ENCODE measurements at regions of chr20 and their contacts with region 1.

Region 1: GRCh38 chr20:32031007-32031958 is 20.8 kb upstream of the HCK start:
- DNase-seq: peak; percentile 67
- H3K4me3 Mint-ChIP-seq: no peak overlapping the region
- H3K27ac Mint-ChIP-seq: no peak overlapping the region
- H3K4me1 Mint-ChIP-seq: no peaks in the 10 kb centered on the region
- H3K27me3 Mint-ChIP-seq: peaks cover 21% of the 10 kb centered on the region

Region 2: DNA sequence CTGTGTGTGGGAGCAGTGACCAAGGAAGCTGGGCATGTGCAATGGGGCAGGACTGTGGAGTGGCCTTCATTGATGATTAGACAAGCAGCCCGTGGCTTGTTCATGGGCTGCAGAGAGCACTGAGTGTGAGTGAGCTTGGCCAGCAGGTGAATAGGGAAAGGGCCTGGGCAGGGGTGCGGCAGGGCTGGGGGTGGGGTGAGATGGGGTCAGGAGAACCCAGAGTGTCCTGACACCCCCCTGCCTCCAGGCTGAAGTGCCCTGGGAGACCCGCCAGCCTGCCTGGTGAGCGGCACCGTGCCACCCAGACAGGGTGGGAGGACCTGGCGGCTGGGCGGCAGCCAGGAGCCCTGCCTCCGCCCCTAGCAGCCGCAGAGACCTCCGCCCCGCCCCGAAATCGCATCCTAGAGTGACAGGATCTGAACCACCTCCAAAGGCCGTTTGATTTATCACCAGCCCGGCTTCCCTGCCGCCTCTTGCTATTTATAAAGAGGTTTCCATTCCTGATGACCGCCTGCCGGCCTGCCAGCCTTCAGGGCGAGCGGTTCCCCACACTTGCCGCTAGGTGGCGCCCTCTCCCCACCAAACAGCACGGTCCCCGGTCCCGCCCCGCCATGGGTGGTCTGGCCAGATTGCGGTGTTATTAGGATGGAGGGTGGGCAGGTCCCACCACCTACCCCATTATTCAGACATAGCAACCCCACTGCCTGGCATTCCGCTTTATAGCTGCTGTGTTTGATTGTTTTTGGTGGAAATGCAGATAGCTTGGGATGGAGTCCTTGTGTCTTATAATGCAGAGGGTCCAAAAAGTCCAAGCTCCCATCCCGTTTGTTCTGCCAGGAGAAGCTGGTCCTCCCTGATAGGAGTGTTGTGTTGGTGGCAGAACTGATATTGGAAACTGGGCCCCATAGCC is 208.6 kb before region 1 on chr20:
- CTCF ChIA-PET with region 1: interaction called, 43 read pairs
- POLR2A ChIA-PET with region 1: no interaction called
- intact Hi-C with region 1: loop called (anchors 1 kb)
- DNase-seq: peak; percentile 81
- H3K4me3 Mint-ChIP-seq: no peak overlapping the region
- H3K27ac Mint-ChIP-seq: no peak overlapping the region
- H3K4me1 Mint-ChIP-seq: peaks cover 5% of the 10 kb centered on the region
- H3K27me3 Mint-ChIP-seq: no peaks in the 10 kb centered on the region

Region 3: GRCh38 chr20:31859998-31860709 is 171.1 kb before region 1 on chr20:
- CTCF ChIA-PET with region 1: interaction called, 67 read pairs
- POLR2A ChIA-PET with region 1: no interaction called
- intact Hi-C with region 1: loop called (anchors 2 kb)
- DNase-seq: no peak
- H3K4me3 Mint-ChIP-seq: no peak overlapping the region
- H3K27ac Mint-ChIP-seq: no peak overlapping the region
- H3K4me1 Mint-ChIP-seq: peaks cover 4% of the 10 kb centered on the region
- H3K27me3 Mint-ChIP-seq: peaks cover 14% of the 10 kb centered on the region

Region 4: GRCh38 chr20:31984981-31985471 is 46.3 kb before region 1 on chr20:
- CTCF ChIA-PET with region 1: no interaction called
- POLR2A ChIA-PET with region 1: no interaction called
- intact Hi-C with region 1: no loop called
- DNase-seq: no peak
- H3K4me3 Mint-ChIP-seq: no peak overlapping the region
- H3K27ac Mint-ChIP-seq: no peak overlapping the region
- H3K4me1 Mint-ChIP-seq: no peaks in the 10 kb centered on the region
- H3K27me3 Mint-ChIP-seq: peaks cover 5% of the 10 kb centered on the region

Region 5: DNA sequence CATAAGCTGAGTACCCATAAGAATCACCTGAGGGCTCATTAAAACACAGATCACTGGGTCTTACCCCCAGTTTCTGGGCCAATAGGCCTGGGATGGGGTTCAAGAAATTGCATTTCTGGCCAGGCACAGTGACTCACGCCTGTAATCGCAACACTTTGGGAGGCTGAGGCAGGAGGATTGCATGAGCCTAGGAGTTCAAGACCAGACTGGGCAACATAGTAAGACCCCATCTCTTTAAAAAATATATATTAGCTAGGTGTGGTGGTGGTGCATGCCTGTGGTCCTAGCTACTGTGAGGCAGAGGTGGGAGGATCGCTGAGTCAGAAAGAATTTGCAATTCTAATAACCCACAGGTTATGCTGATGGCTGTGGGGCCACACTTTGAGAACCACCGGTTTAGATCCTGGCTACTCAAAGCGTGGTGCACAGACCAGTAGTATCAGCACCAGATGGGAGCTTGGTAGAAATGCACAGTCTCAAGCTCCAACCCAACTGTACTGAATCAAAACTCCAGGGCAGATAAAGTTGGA is 19.1 kb before region 1 on chr20:
- CTCF ChIA-PET with region 1: interaction called, 20 read pairs
- POLR2A ChIA-PET with region 1: no interaction called
- intact Hi-C with region 1: no loop called
- DNase-seq: no peak
- H3K4me3 Mint-ChIP-seq: no peak overlapping the region
- H3K27ac Mint-ChIP-seq: no peak overlapping the region
- H3K4me1 Mint-ChIP-seq: no peaks in the 10 kb centered on the region
- H3K27me3 Mint-ChIP-seq: peaks cover 15% of the 10 kb centered on the region

Region 6: GRCh38 chr20:32052090-32052777 is 21.0 kb after region 1 on chr20 and contains the start of gene HCK:
- CTCF ChIA-PET with region 1: interaction called, 13 read pairs
- POLR2A ChIA-PET with region 1: no interaction called
- intact Hi-C with region 1: no loop called
- DNase-seq: no peak
- H3K4me3 Mint-ChIP-seq: peak within 1 kb of the TSS; percentile 42
- H3K27ac Mint-ChIP-seq: no peak within 1 kb of the TSS
- H3K4me1 Mint-ChIP-seq: peaks cover 15% of the 10 kb centered on the region
- H3K27me3 Mint-ChIP-seq: peaks cover 59% of the 10 kb centered on the region
- total RNA-seq, gene HCK: not detected